OCI-LY7 (cell line): ENCODE measurements at regions of chr6 and their contacts with region 1.

Region 1: GRCh38 chr6:151357758-151358436 is 33.5 kb downstream of the ZBTB2 start:
- DNase-seq: no peak
- H3K4me3 ChIP-seq: no peak overlapping the region
- H3K27ac ChIP-seq: no peak overlapping the region
- H3K4me1 ChIP-seq: no peaks in the 10 kb centered on the region
- CTCF ChIP-seq: no peak

Region 2: GRCh38 chr6:151340219-151340978 is 17.5 kb before region 1 on chr6:
- CTCF ChIA-PET with region 1: no interaction called
- POLR2A ChIA-PET with region 1: no interaction called
- intact Hi-C with region 1: no loop called
- DNase-seq: no peak
- H3K4me3 ChIP-seq: no peak overlapping the region
- H3K27ac ChIP-seq: no peak overlapping the region
- H3K4me1 ChIP-seq: no peaks in the 10 kb centered on the region
- CTCF ChIP-seq: no peak

Region 3: DNA sequence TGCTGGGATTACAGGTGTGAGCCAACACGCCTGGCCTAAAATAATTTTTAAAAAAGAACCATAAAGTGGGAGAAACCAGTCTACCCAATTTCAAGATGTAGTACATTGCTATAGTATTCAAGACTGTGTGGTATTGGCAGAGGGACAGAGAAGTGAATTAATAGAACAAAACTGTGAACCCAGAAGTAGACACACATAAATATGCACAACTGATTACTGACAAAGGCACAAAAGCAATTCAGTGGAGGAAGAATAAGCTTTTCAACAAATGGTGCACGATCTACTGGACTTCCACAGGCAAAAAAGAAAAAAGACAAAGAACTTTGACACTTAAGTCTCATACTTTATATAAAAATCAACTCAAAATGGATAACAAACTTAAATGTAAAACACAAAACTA is 17.9 kb after region 1 on chr6:
- CTCF ChIA-PET with region 1: no interaction called
- POLR2A ChIA-PET with region 1: interaction called, 10 read pairs
- intact Hi-C with region 1: no loop called
- DNase-seq: no peak
- H3K4me3 ChIP-seq: peak overlapping the region; percentile 47
- H3K27ac ChIP-seq: peak overlapping the region; percentile 66
- H3K4me1 ChIP-seq: peaks cover 72% of the 10 kb centered on the region
- CTCF ChIP-seq: no peak

Region 4: GRCh38 chr6:151546941-151547659 is 189.2 kb after region 1 on chr6:
- CTCF ChIA-PET with region 1: no interaction called
- POLR2A ChIA-PET with region 1: interaction called, 10 read pairs
- intact Hi-C with region 1: no loop called
- DNase-seq: no peak
- H3K4me3 ChIP-seq: no peak overlapping the region
- H3K27ac ChIP-seq: no peak overlapping the region
- H3K4me1 ChIP-seq: no peaks in the 10 kb centered on the region
- CTCF ChIP-seq: peak; percentile 28; the same call in 1 of the 2 replicates